ENCODE measurements at regions of chr3 and their contacts with region 1.

Region 1: GRCh38 chr3:112390783-112391641 is 58.1 kb downstream of the CD200 start:
- DNase-seq: peak; percentile 73
- H3K4me3 Mint-ChIP-seq: peak overlapping the region; percentile 36
- H3K27ac Mint-ChIP-seq: peak overlapping the region; percentile 79
- H3K4me1 Mint-ChIP-seq: peaks cover 44% of the 10 kb centered on the region
- H3K27me3 Mint-ChIP-seq: no peaks in the 10 kb centered on the region

Region 2: GRCh38 chr3:112187300-112187699 is 203.7 kb before region 1 on chr3:
- intact Hi-C with region 1: no loop called
- DNase-seq: no peak
- H3K4me3 Mint-ChIP-seq: no peak overlapping the region
- H3K27ac Mint-ChIP-seq: no peak overlapping the region
- H3K4me1 Mint-ChIP-seq: no peaks in the 10 kb centered on the region
- H3K27me3 Mint-ChIP-seq: peaks cover 6% of the 10 kb centered on the region

Region 3: DNA sequence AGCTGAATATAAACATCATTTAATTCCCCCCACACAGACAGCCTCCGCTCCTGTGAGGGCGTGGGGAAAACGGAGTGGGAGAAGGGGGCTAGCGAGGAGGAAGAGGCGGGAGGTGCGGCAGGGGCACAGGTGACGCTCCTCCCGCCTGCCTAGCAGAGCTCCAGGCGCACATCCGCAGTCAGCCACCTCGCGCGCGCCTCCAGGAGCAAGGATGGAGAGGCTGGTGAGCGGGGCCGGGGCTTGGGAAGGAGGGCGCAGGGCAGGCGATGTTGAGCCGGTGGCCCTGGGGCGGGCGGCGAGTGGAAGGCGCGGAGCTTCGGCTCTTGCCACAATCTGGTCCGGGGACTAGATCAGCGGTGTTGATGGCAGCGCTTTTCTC is 58.0 kb before region 1 on chr3 and contains the start of gene CD200:
- intact Hi-C with region 1: loop called (anchors 5 kb)
- DNase-seq: peak; percentile 87
- H3K4me3 Mint-ChIP-seq: peak within 1 kb of the TSS; percentile 90
- H3K27ac Mint-ChIP-seq: peak within 1 kb of the TSS; percentile 84
- H3K4me1 Mint-ChIP-seq: peaks cover 44% of the 10 kb centered on the region
- H3K27me3 Mint-ChIP-seq: no peaks in the 10 kb centered on the region
- total RNA-seq, gene CD200: 144 and 151 TPM in 2 replicates

Region 4: DNA sequence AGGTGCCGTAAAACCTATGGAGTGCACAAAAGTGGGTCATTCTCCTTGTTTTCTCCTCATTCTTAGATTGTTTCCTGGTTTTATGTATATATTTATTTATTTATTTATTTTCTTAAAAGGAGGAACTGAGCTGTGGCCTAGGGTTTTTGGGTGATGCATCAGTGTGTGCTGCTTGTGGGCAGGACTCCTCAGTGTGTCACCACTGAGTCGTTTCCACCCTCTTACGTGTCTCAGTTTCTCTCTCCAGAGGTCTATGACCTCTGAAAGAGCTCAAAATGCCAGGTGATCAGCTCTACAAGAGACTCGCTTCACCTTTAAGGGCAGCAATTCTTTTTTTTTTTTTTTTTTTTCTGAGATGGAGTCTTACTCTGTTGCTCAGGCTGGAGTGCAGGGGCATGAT is 14.8 kb after region 1 on chr3:
- intact Hi-C with region 1: loop called (anchors 2 kb)
- DNase-seq: peak; percentile 56
- H3K4me3 Mint-ChIP-seq: no peak overlapping the region
- H3K27ac Mint-ChIP-seq: peak overlapping the region; percentile 20
- H3K4me1 Mint-ChIP-seq: peaks cover 14% of the 10 kb centered on the region
- H3K27me3 Mint-ChIP-seq: no peaks in the 10 kb centered on the region

Region 5: GRCh38 chr3:112519424-112520001 is 128.5 kb after region 1 on chr3:
- intact Hi-C with region 1: loop called (anchors 5 kb)
- DNase-seq: peak; percentile 83
- H3K4me3 Mint-ChIP-seq: no peak overlapping the region
- H3K27ac Mint-ChIP-seq: no peak overlapping the region
- H3K4me1 Mint-ChIP-seq: peaks cover 20% of the 10 kb centered on the region
- H3K27me3 Mint-ChIP-seq: no peaks in the 10 kb centered on the region

Measured in activated CD4-positive, alpha-beta T cell treated with anti-CD3 and anti-CD28 coated beads, Interleukin-2, amount 10 ng/mL, durations not matched to agents 24 days and 14 days (primary cell).